Activated naive CD4-positive, alpha-beta T cell treated with anti-CD3 and anti-CD28 coated beads for 36 hours (primary cell): ENCODE measurements at regions of chr10 and their contacts with region 1.

Region 1: GRCh38 chr10:28532383-28533175 is at the start of gene WAC:
- DNase-seq: peak; percentile 98
- H3K4me3 Mint-ChIP-seq: peak within 1 kb of the TSS; percentile 99
- H3K27ac Mint-ChIP-seq: peak within 1 kb of the TSS; percentile 100
- H3K4me1 Mint-ChIP-seq: peaks cover 51% of the 10 kb centered on the region
- H3K27me3 Mint-ChIP-seq: no peaks in the 10 kb centered on the region
- total RNA-seq, gene WAC: 77.1 to 82.9 TPM

Region 2: DNA sequence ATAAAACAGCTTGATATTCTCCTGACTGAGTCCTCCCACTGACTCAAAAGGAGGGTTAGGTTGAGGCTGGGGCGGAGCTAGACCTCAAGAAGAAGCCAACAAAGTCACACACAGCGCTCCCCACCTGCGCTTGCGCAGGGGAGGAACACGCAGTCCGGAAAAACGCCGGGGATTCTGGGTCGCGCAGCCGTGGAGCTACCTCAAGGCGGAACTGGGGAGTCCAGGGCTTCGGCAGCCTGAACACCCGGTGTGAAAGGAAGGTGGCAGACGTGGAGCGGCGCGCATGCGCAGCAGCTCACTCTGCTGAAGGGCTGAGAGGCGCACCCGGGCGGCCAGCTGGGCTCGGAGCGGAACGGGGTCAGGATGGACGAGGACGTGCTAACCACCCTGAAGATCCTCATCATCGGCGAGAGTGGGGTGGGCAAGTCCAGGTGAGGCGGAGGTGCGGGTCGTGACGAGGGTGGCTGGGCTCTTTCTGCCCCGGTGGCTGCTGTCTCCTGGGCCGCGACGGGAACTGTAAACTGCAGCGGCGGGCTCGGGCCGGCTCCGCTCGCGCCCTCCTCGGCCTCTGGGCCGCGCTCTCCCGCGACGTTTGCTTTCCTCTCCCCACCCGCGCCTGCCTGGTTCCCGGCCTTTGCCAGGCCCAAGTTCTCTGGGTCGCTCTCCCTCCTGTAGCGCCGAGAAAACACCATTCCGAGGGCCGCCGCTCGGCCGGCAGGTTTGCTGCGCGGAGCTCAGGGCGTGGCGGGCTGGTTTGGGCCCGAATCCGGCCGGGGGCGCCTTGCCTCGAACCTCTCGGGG is 1028.4 kb before region 1 on chr10 and contains the start of gene RAB18:
- CTCF ChIA-PET with region 1: no interaction called
- intact Hi-C with region 1: loop called (anchors 1 kb)
- DNase-seq: peak; percentile 99
- H3K4me3 Mint-ChIP-seq: peak within 1 kb of the TSS; percentile 99
- H3K27ac Mint-ChIP-seq: peak within 1 kb of the TSS; percentile 92
- H3K4me1 Mint-ChIP-seq: peaks cover 41% of the 10 kb centered on the region
- H3K27me3 Mint-ChIP-seq: no peaks in the 10 kb centered on the region
- total RNA-seq, gene RAB18: 35.4 to 41.3 TPM

Region 3: DNA sequence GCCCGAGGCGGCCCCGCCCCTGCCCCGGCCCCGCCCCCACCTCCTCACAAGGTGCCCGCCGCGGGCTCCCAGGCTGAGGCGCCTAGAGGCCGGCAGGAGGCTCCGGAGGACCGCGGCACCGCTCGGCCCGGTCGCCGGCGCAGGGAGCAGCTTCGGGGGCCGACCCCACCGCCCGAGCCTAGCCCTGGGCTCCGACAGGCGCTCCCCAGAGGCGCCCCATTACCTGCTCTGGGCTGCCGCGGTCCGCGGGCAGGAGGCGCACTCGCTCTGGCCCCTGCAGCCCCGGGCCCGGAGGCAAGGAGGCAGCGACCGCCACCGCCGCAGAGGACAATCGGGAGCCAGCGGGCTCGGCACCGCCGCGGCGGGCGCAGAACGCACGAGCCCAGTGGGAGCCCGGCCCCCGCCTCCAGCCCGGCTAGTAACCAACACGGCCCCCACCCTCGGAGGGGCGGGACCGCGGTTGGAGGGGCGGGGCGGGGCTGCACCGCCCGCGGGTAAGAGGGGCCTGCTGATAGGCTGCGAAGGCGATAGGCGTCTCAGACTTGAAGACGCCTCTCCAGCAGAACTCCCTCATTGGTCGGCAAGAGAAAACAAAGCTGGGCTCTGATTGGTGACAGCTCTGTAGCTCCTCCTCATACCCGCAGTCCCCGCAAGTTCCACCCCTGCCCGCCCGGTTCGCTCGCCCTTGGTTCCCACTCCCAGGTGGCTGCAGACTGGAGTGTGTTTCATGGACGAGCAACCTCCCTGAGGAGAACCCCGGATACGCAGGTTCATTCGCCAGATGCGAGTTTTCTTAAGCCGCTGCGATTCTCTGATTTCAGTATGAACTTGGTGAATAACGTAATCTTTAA is 229.7 kb before region 1 on chr10 and contains the start of gene MPP7:
- CTCF ChIA-PET with region 1: no interaction called
- intact Hi-C with region 1: loop called (anchors 1 kb)
- DNase-seq: peak; percentile 95
- H3K4me3 Mint-ChIP-seq: peak within 1 kb of the TSS; percentile 82
- H3K27ac Mint-ChIP-seq: peak within 1 kb of the TSS; percentile 77
- H3K4me1 Mint-ChIP-seq: peaks cover 53% of the 10 kb centered on the region
- H3K27me3 Mint-ChIP-seq: no peaks in the 10 kb centered on the region
- total RNA-seq, gene MPP7: 23.6 to 25.4 TPM

Region 4: DNA sequence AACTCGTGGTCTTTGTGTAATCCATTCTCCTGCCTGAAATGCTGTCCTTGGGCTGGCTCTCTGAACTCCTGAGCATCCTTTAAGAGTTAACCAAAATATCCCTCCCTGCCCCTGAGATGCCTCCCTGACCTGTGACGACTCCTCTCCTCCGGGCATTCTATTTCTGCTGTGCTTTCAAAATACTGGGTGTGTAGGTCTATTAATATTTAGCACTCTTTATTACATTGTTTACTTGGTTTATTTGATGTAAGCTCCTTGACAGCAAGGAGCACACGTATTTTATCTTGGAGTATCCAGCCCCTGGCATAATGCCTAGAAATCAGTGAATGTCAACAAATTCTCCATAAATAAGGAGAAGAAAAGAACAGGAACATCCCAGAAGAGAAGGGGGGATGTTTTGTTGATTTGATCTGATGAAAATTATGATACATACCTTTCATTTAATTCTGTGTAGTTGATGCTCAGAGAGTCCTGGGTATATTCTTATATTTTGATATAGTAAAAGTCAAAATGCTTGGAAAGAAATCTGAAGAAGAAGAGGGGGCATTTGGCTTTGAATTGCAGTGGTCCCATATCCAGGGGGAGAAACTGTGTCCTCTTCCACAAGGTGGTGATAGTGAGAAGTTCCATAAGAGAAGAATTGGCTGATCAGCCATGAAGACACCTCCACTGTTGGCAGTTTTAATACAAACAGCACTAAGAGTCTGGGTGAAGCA is 122.0 kb before region 1 on chr10:
- CTCF ChIA-PET with region 1: no interaction called
- intact Hi-C with region 1: loop called (anchors 2 kb)
- DNase-seq: no peak
- H3K4me3 Mint-ChIP-seq: no peak overlapping the region
- H3K27ac Mint-ChIP-seq: no peak overlapping the region
- H3K4me1 Mint-ChIP-seq: peaks cover 11% of the 10 kb centered on the region
- H3K27me3 Mint-ChIP-seq: peaks cover 15% of the 10 kb centered on the region

Region 5: GRCh38 chr10:28551086-28551485 is 18.5 kb after region 1 on chr10:
- CTCF ChIA-PET with region 1: no interaction called
- intact Hi-C with region 1: loop called (anchors 1 kb)
- DNase-seq: no peak
- H3K4me3 Mint-ChIP-seq: no peak overlapping the region
- H3K27ac Mint-ChIP-seq: no peak overlapping the region
- H3K4me1 Mint-ChIP-seq: peaks cover 72% of the 10 kb centered on the region
- H3K27me3 Mint-ChIP-seq: no peaks in the 10 kb centered on the region

Region 6: GRCh38 chr10:28592930-28593329 is 60.4 kb after region 1 on chr10:
- CTCF ChIA-PET with region 1: no interaction called
- intact Hi-C with region 1: loop called (anchors 2 kb)
- DNase-seq: no peak
- H3K4me3 Mint-ChIP-seq: no peak overlapping the region
- H3K27ac Mint-ChIP-seq: peak overlapping the region; percentile 10
- H3K4me1 Mint-ChIP-seq: peaks cover 51% of the 10 kb centered on the region
- H3K27me3 Mint-ChIP-seq: no peaks in the 10 kb centered on the region

Region 7: DNA sequence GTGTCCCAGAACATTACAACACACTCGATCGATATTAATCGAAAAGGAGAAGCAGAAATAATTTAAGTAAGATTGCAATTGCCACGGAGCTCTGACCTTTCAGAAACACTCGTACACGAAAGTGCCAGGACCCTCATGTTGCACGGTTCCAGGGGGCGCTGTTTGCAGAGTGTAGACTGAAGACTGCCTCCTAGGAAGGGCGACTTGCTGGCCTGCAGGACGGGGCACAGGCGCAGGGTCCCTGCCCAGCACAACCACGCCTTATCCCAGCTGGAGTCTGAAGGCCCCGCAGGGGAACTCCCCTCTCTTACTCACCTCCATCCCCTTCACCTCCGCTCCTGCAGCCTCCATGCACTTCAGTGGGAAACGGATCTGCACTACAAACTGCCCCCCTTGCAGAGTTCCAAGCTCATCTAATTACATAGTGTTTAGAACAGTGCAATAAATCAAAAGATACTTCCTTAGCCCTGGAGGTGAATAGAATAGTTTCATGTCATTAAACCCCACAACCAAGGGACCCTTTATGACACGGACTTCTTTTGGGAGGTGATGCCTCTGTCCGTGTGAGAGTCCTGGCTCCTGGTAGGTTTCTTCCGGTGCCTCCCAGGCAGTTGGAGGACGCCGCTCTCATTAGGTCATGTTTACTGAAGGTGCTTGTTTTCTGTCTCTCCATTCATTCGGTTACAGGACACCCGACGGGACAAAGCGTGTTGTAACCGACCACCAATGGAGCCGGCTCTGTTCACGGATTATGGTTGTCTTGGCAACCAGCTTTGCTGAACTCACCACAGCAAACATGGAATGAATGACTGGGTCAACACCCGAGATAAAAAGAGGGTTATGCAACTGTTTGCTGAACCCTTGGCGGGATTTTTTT is 406.9 kb after region 1 on chr10:
- CTCF ChIA-PET with region 1: no interaction called
- intact Hi-C with region 1: no loop called
- DNase-seq: no peak
- H3K4me3 Mint-ChIP-seq: no peak overlapping the region
- H3K27ac Mint-ChIP-seq: no peak overlapping the region
- H3K4me1 Mint-ChIP-seq: no peaks in the 10 kb centered on the region
- H3K27me3 Mint-ChIP-seq: peaks cover 1% of the 10 kb centered on the region